PC-3 (cell line): ENCODE measurements at regions of chr11 and their contacts with region 1.

Region 1: DNA sequence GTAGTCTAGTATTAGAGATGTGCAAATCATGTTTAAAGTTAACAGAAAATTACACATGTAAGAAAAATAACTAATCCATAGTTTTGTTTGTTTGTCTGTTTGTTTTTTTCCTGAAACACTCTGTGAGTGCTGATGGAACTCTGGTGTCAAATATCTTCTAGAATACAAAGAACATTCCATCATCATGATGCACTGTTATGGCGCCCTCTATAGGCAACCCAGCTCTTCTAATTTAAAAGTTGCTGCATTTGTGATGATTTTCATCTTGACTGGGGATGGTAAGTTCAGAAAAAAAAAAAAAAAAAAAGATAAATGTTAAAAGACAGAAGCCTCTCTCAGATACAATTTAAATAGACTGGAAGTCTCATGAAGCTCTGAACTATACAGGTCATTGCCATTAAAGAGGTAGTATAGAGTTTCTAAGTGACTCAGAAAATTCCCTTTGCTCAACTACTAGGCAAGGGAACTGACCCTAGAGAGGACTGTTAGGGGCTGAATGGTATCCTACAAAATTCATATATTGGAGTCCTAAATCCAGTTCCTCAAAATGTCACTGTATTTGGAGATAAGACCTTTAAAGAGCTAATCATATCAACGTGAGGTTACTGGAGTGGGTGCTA is 597.2 kb upstream of the ANO3 start:
- DNase-seq: peak; percentile 58
- ATAC-seq: peak; percentile 69
- H3K4me3 ChIP-seq: no peak overlapping the region
- H3K27ac ChIP-seq: no peak overlapping the region
- H3K4me1 ChIP-seq: peaks cover 4% of the 10 kb centered on the region; the same call in 1 of the 2 replicates
- H3K27me3 ChIP-seq: no peaks in the 10 kb centered on the region
- CTCF ChIP-seq: peak; percentile 61

Region 2: GRCh38 chr11:24437123-24437522 is 1297.6 kb before region 1 on chr11:
- CTCF ChIA-PET with region 1: interaction called, 5 read pairs
- POLR2A ChIA-PET with region 1: no interaction called
- intact Hi-C with region 1: loop called (anchors 5 kb)
- DNase-seq: peak; percentile 9
- ATAC-seq: peak; percentile 67
- H3K4me3 ChIP-seq: no peak overlapping the region
- H3K27ac ChIP-seq: no peak overlapping the region
- H3K4me1 ChIP-seq: no peaks in the 10 kb centered on the region
- H3K27me3 ChIP-seq: no peaks in the 10 kb centered on the region
- CTCF ChIP-seq: peak; percentile 46; the same call in 1 of the 2 replicates

Region 3: DNA sequence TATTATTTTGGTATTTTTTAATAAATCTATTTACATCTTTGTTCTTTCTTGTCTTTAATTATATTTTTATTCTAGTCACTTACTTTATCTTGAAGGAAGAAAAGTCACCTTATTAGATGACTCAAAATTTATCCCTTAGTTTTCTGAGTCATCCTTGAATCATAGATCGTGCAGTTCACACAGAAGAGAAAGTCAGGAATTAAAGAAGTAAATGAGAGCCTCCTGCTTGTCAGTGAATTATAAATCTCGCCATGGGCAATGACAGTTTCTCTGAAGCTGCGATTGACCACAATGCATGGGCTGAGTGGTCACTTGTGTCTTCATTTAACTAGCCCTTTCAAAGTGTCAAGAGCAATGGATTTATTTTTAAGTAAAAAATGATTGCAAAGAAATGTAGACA is 1146.6 kb before region 1 on chr11:
- CTCF ChIA-PET with region 1: no interaction called
- POLR2A ChIA-PET with region 1: no interaction called
- intact Hi-C with region 1: loop called (anchors 5 kb)
- DNase-seq: peak; percentile 71
- ATAC-seq: peak; percentile 60
- H3K4me3 ChIP-seq: 0 out of 2 replicates have a peak overlapping the region, but pooled peaks have one; percentile 10
- H3K27ac ChIP-seq: peak overlapping the region; percentile 39; the same call in 1 of the 2 replicates
- H3K4me1 ChIP-seq: peaks cover 38% of the 10 kb centered on the region
- H3K27me3 ChIP-seq: no peaks in the 10 kb centered on the region
- CTCF ChIP-seq: no peak

Region 4: DNA sequence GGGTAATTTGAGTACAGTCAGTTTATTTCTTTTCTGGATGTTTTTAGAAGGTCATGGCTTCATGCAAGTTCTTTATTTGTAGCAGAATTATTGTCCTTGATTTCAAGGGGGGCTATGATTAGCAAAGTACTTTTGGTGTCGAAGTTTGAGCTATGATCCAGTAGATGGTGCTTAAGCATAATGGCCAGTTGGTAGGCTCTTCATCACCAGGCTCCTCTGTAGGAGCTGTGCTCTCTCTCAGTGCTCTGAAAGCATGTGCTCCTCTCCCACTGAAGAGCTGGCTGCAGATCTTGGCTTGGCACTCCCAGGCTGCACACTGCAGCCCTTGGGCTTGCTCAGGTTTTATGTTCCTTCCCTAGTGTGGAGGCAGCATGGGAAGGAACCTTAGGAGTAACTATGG is 385.2 kb before region 1 on chr11:
- CTCF ChIA-PET with region 1: interaction called, 3 read pairs
- POLR2A ChIA-PET with region 1: no interaction called
- intact Hi-C with region 1: loop called (anchors 5 kb)
- DNase-seq: no peak
- ATAC-seq: no peak
- H3K4me3 ChIP-seq: no peak overlapping the region
- H3K27ac ChIP-seq: no peak overlapping the region
- H3K4me1 ChIP-seq: no peaks in the 10 kb centered on the region
- H3K27me3 ChIP-seq: no peaks in the 10 kb centered on the region
- CTCF ChIP-seq: no peak

Region 5: GRCh38 chr11:25423436-25424199 is 311.1 kb before region 1 on chr11:
- CTCF ChIA-PET with region 1: no interaction called
- POLR2A ChIA-PET with region 1: no interaction called
- intact Hi-C with region 1: no loop called
- DNase-seq: peak; percentile 41
- ATAC-seq: peak; percentile 40; the same call in 1 of the 2 replicates
- H3K4me3 ChIP-seq: no peak overlapping the region
- H3K27ac ChIP-seq: no peak overlapping the region
- H3K4me1 ChIP-seq: no peaks in the 10 kb centered on the region
- H3K27me3 ChIP-seq: no peaks in the 10 kb centered on the region
- CTCF ChIP-seq: no peak

Region 6: DNA sequence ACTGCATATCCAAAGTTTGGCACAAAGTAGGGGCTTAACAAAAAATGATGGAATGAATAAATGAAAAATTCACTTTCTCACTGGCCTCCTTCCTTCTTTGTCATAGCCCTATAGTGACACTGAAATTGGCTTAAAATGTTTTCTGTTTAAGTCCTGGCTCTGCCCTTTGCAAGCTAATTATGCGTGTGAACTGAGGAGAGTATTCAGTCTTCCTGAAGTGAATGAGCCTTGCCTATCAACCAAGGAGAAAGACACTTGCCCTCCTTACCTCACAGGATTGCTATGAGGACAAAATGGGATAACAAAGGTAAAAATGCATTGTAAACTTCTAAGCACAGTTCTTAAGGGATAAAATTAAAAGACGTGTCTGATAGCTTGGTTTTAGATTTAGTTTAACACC is 132.6 kb before region 1 on chr11:
- CTCF ChIA-PET with region 1: no interaction called
- POLR2A ChIA-PET with region 1: no interaction called
- intact Hi-C with region 1: no loop called
- DNase-seq: no peak
- ATAC-seq: no peak
- H3K4me3 ChIP-seq: no peak overlapping the region
- H3K27ac ChIP-seq: no peak overlapping the region
- H3K4me1 ChIP-seq: no peaks in the 10 kb centered on the region
- H3K27me3 ChIP-seq: no peaks in the 10 kb centered on the region
- CTCF ChIP-seq: no peak

Region 7: GRCh38 chr11:25927411-25927953 is 192.8 kb after region 1 on chr11:
- CTCF ChIA-PET with region 1: interaction called, 11 read pairs
- POLR2A ChIA-PET with region 1: no interaction called
- intact Hi-C with region 1: no loop called
- DNase-seq: no peak
- ATAC-seq: no peak
- H3K4me3 ChIP-seq: no peak overlapping the region
- H3K27ac ChIP-seq: no peak overlapping the region
- H3K4me1 ChIP-seq: no peaks in the 10 kb centered on the region
- H3K27me3 ChIP-seq: no peaks in the 10 kb centered on the region
- CTCF ChIP-seq: no peak